ENCODE measurements at regions of chr1 and their contacts with region 1.

Region 1: DNA sequence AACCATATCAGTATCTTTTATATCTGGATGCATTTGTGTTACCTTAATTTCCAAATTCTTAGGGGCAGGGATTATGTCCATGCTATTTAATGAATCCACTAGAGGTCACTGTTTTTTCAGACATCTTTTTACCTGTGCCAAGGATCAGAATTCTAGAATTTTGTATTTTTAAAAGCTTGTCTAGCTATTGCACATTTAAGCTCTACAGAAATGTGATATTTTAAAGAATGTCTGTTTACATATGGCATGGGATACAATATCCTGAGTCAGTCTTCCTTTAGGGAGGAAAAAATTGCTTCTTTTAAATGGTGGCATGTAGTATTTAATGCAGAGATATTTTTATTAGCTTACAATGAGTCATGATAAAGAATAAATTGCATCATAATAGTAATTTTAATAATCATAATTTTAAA is 11.3 kb downstream of the RPAP2 start:
- DNase-seq: peak in 2 of 4 experiments; percentile 32 to 42
- ATAC-seq: peak; percentile 80
- H3K4me3 ChIP-seq: no peak overlapping the region
- H3K27ac ChIP-seq: no peak overlapping the region
- H3K4me1 ChIP-seq: no peaks in the 10 kb centered on the region
- H3K27me3 ChIP-seq: no peaks in the 10 kb centered on the region
- CTCF ChIP-seq: peak in 2 of 3 experiments; percentile 38 to 71; a peak in 3 of 6 replicates
- EP300 ChIP-seq: no peak
- POLR2A ChIP-seq: no peak
- RAD21 ChIP-seq: peak; percentile 82 to 88

Region 2: DNA sequence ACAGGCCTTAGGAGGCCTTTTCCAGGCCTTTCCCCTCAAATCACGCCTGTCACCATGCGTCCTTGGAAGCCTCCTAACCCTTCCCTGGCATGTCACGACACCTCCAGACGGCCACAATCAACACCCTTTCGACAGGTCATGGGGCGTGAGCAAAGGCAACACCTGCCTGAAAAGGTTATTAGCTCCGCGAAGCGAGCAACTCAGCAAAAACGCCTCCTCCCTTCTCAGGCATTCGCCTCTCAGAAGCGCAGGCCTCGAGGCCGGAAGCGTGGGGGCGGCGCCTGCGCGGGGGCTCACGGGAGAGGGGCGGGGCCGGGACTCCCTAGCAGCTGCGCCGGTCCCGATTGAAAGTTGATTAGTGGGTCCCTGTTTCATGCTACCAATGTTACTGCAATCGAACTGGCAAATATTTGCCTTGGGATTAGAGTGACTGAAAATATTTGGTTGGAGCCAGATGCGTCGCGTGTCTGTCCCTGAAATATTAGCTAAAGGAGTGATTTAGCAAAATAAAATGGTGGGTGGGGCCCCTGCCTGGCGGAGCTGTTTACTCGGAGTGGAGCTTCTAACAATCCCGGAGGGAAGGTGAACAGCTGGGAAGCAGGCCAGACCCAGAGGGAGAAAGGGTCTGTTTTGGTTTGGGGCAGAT is 131.6 kb after region 1 on chr1:
- CTCF ChIA-PET with region 1: no interaction called
- POLR2A ChIA-PET with region 1: no interaction called
- in situ Hi-C with region 1: no loop called
- intact Hi-C with region 1: loop called (anchors 10 kb)
- DNase-seq: peak; percentile 19 to 29 (median 25)
- ATAC-seq: peak; percentile 67; the same call in 2 of the 3 replicates
- H3K4me3 ChIP-seq: no peak overlapping the region
- H3K27ac ChIP-seq: no peak overlapping the region
- H3K4me1 ChIP-seq: peaks cover 5 to 8% of the 10 kb centered on the region in 2 experiments
- H3K27me3 ChIP-seq: no peaks in the 10 kb centered on the region
- CTCF ChIP-seq: no peak
- EP300 ChIP-seq: no peak
- POLR2A ChIP-seq: no peak
- RAD21 ChIP-seq: no peak

Region 3: DNA sequence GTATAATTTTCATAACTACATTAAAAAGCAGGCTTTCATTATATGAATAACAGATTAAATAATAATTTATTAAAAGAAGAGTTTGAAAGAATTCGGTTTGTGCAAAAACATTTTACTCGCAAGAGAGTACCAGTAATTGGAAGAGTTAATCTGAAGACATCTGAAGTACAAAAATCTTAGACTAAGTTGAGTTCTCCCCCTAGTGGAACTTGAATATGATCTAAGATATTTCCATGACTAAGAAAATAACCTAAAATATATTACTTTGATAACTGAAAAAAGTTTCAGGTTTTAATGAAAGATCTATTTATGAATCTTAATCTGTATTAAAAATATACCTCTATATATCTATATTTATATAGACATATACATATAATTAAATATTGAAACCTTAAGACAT is 289.0 kb after region 1 on chr1:
- CTCF ChIA-PET with region 1: interaction called, 6 read pairs
- POLR2A ChIA-PET with region 1: no interaction called
- in situ Hi-C with region 1: no loop called
- intact Hi-C with region 1: loop called (anchors 1 kb)
- DNase-seq: peak in 2 of 4 experiments; percentile 12 to 30
- ATAC-seq: no peak
- H3K4me3 ChIP-seq: no peak overlapping the region
- H3K27ac ChIP-seq: no peak overlapping the region
- H3K4me1 ChIP-seq: no peaks in the 10 kb centered on the region
- H3K27me3 ChIP-seq: no peaks in the 10 kb centered on the region
- CTCF ChIP-seq: peak in 1 of 3 experiments; percentile 53; a peak in 2 of 6 replicates
- EP300 ChIP-seq: no peak
- POLR2A ChIP-seq: no peak
- RAD21 ChIP-seq: peak; percentile 77 to 78

Region 4: GRCh38 chr1:92623187-92623778 is 313.1 kb after region 1 on chr1:
- CTCF ChIA-PET with region 1: interaction called, 11 read pairs
- POLR2A ChIA-PET with region 1: no interaction called
- in situ Hi-C with region 1: loop called (anchors 5 kb)
- intact Hi-C with region 1: loop called (anchors 1 kb)
- DNase-seq: peak in 2 of 4 experiments; percentile 8 to 14
- ATAC-seq: peak; percentile 72
- H3K4me3 ChIP-seq: no peak overlapping the region
- H3K27ac ChIP-seq: no peak overlapping the region
- H3K4me1 ChIP-seq: no peaks in the 10 kb centered on the region
- H3K27me3 ChIP-seq: no peaks in the 10 kb centered on the region
- CTCF ChIP-seq: peak; percentile 18 to 68 (median 27); a peak in 3 of 6 replicates
- EP300 ChIP-seq: no peak
- POLR2A ChIP-seq: no peak
- RAD21 ChIP-seq: peak; percentile 73 to 81

Region 5: GRCh38 chr1:92728697-92729096 is 418.5 kb after region 1 on chr1:
- CTCF ChIA-PET with region 1: no interaction called
- POLR2A ChIA-PET with region 1: no interaction called
- in situ Hi-C with region 1: no loop called
- intact Hi-C with region 1: no loop called
- DNase-seq: no peak
- ATAC-seq: no peak
- H3K4me3 ChIP-seq: no peak overlapping the region
- H3K27ac ChIP-seq: no peak overlapping the region
- H3K4me1 ChIP-seq: no peaks in the 10 kb centered on the region
- H3K27me3 ChIP-seq: no peaks in the 10 kb centered on the region
- CTCF ChIP-seq: no peak
- EP300 ChIP-seq: no peak
- POLR2A ChIP-seq: no peak
- RAD21 ChIP-seq: no peak

Region 6: DNA sequence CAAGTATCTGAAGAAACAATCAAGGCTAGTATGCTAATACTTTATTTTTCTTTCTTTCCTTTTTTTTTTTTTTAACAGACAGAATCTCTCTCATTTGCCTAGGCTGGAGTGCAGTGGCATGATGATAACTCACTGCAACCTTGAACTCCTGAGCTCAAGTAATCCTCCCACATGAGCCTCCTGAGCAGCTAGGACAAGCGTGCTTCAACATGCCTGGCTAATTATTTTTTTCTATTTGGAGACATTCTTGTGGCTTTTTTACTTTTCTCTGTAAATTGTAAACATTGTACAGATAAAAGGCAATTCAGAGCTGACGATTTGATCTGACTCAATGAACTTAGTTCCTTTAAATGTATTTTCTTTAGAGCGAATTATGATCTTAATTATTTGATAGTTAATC is 911.7 kb after region 1 on chr1:
- CTCF ChIA-PET with region 1: no interaction called
- POLR2A ChIA-PET with region 1: no interaction called
- in situ Hi-C with region 1: no loop called
- intact Hi-C with region 1: no loop called
- DNase-seq: no peak
- ATAC-seq: no peak
- H3K4me3 ChIP-seq: no peak overlapping the region
- H3K27ac ChIP-seq: no peak overlapping the region
- H3K4me1 ChIP-seq: no peaks in the 10 kb centered on the region
- H3K27me3 ChIP-seq: no peaks in the 10 kb centered on the region
- CTCF ChIP-seq: no peak
- EP300 ChIP-seq: no peak
- POLR2A ChIP-seq: no peak
- RAD21 ChIP-seq: no peak

Measured in K562 (cell line).